ENCODE measurements at regions of chr6 and their contacts with region 1.

Region 1: GRCh38 chr6:33781114-33781975 is 7.6 kb downstream of the LEMD2 start:
- DNase-seq: peak; percentile 55
- ATAC-seq: peak; percentile 83
- H3K4me3 Mint-ChIP-seq: 0 out of 2 replicates have a peak overlapping the region, but pooled peaks have one; percentile 20
- H3K27ac Mint-ChIP-seq: peak overlapping the region; percentile 94
- H3K4me1 Mint-ChIP-seq: peaks cover 66% of the 10 kb centered on the region
- H3K27me3 Mint-ChIP-seq: no peaks in the 10 kb centered on the region
- CTCF ChIP-seq: no peak

Region 2: GRCh38 chr6:33720994-33721393 is 60.4 kb before region 1 on chr6:
- CTCF ChIA-PET with region 1: no interaction called
- POLR2A ChIA-PET with region 1: no interaction called
- DNase-seq: no peak
- ATAC-seq: no peak
- H3K4me3 Mint-ChIP-seq: no peak overlapping the region
- H3K27ac Mint-ChIP-seq: no peak overlapping the region
- H3K4me1 Mint-ChIP-seq: peaks cover 25% of the 10 kb centered on the region
- H3K27me3 Mint-ChIP-seq: peaks cover 4% of the 10 kb centered on the region; the same call in 1 of the 2 replicates
- CTCF ChIP-seq: no peak

Region 3: DNA sequence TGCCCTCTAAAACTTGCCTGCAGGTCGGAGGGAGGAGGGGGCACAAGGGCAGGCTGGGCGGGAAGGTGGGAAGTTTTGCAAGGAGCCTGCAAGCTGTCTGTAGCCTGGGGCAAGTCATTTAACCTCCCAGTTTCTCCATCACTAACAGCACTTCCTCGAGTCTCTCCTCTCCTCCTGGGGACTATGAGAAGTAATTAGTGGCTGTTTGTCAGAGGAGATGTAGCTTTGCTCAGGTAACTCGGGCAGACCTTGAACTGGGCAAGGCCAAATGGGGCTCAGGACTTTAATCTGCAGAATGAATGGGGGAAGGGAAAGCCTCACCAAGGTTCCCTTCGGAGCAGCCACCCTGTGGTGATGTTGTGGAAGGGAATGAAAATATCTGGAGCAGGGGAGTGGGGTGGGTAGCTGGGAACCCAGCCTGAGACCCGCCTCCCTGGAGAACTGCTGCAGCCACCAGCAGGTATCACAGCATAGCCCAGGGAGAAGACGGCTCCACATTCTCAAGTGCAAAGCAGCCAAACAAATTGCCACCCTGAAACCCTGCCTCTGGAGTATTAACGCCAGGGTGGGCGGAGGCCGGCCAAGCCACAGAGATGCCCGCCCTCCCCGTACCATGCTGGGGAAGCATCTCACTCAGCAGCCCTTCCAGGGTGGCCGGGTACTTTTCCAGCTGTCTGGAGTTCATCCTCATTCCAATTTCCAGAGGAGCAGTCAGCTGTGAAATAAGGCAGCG is 13.7 kb after region 1 on chr6:
- CTCF ChIA-PET with region 1: interaction called, 13 read pairs
- POLR2A ChIA-PET with region 1: no interaction called
- DNase-seq: no peak
- ATAC-seq: peak; percentile 36
- H3K4me3 Mint-ChIP-seq: no peak overlapping the region
- H3K27ac Mint-ChIP-seq: peak overlapping the region; percentile 41; the same call in 1 of the 2 replicates
- H3K4me1 Mint-ChIP-seq: peaks cover 72% of the 10 kb centered on the region
- H3K27me3 Mint-ChIP-seq: no peaks in the 10 kb centered on the region; the same call in 1 of the 2 replicates
- CTCF ChIP-seq: no peak

Region 4: DNA sequence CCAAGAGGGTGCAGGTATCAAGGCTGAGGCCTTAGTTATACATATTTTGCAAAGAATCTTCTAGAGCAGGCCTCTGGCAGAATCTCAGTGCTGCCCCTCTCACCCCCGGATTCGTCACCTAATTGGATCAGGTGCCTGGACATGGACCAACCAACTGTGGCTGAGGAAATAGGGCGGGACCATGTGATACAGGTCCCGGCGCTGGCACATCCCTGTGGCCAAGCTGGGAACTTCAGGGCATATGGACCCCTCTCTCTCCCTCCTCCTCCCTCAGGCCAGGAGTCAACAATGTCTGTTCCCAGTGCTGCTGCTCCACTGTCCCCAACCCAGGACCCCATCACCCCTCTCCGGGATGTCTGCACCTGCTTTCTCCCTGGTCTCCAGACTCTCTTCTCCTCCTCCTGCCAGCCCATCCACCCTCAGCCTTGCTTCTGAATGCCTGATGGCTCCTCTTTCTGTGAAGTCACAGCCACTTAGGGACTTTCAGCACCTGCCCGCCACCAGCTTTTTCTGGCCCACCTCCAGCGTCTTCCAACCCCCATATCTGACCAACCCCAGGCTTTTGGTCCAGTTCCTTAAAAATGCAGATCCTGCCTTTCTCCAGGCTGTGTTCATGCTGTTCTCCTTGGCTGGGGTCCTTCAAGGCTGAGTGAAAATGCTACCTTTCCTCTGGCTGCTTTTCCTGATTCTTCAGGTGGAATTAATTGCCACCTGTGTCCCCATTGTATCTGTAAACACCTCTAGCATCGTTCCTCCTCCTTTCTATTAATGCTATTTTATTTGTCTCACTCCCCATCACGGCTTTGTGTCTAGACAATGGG is 41.4 kb after region 1 on chr6:
- CTCF ChIA-PET with region 1: interaction called, 17 read pairs
- POLR2A ChIA-PET with region 1: no interaction called
- DNase-seq: peak; percentile 76
- ATAC-seq: peak; percentile 97
- H3K4me3 Mint-ChIP-seq: no peak overlapping the region
- H3K27ac Mint-ChIP-seq: no peak overlapping the region
- H3K4me1 Mint-ChIP-seq: peaks cover 23% of the 10 kb centered on the region
- H3K27me3 Mint-ChIP-seq: peaks cover under 1% of the 10 kb centered on the region; the same call in 1 of the 2 replicates
- CTCF ChIP-seq: peak; percentile 34; the same call in 1 of the 2 replicates